ENCODE measurements at regions of chr3 and their contacts with region 1.

Region 1: GRCh38 chr3:133426721-133427120 is 26.9 kb downstream of the BFSP2 start:
- DNase-seq: no peak
- H3K4me3 ChIP-seq: no peak overlapping the region
- H3K4me3 Mint-ChIP-seq: no peak overlapping the region
- H3K27ac Mint-ChIP-seq: no peak overlapping the region
- H3K4me1 ChIP-seq: peaks cover 4% of the 10 kb centered on the region; the same call in 1 of the 2 replicates
- H3K4me1 Mint-ChIP-seq: no peaks in the 10 kb centered on the region
- H3K27me3 ChIP-seq: no peaks in the 10 kb centered on the region
- H3K27me3 Mint-ChIP-seq: no peaks in the 10 kb centered on the region
- CTCF ChIP-seq: no peak

Region 2: DNA sequence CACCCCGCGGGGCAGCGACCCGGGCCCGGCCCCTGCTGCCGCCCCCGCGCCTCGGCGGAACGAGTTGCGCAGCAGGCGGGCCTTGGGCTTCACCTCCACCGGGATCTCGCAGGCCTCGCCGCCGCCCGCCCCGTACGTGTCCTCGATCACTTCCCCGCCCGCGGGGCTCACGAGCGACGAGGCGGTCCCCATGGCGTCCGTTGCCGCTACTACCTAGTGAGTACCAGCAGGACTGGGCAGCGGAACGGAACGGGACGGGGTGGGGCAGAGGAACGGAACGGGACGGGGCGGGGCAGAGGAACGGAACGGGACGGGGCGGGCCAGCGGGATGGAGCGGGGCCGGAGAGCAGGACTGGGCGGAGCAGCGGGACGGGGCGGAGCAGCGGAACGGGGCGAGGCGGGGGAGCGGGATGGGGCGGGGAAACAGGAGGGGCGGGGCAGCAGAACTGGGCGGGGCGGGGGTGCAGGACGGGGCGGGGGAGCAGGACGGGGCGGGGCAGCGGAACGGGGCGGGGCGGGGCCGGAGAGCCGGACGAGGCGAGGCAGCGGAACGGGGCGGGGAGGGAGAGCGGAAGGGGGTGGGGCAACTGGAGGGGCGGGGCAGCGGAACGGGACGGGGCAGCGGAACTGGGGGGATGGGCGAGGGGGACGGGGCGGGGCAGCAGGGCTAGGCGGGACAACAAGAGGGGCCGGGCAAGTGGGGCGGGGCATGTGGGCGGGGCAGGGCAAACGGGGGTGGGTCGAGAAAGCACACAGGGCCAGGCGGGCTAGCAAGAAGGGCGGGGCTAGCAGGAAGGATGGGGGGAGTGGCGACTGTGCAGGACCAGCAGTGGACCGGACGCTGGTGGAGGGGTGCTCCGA is 704.3 kb before region 1 on chr3 and contains the start of gene NPHP3:
- CTCF ChIA-PET with region 1: no interaction called
- POLR2A ChIA-PET with region 1: no interaction called
- intact Hi-C with region 1: loop called (anchors 1 kb)
- DNase-seq: peak; percentile 92 to 98
- H3K4me3 ChIP-seq: peak within 1 kb of the TSS; percentile 97
- H3K4me3 Mint-ChIP-seq: peak within 1 kb of the TSS; percentile 87
- H3K27ac Mint-ChIP-seq: peak within 1 kb of the TSS; percentile 88
- H3K4me1 ChIP-seq: peaks cover 9% of the 10 kb centered on the region
- H3K4me1 Mint-ChIP-seq: peaks cover 16% of the 10 kb centered on the region
- H3K27me3 ChIP-seq: no peaks in the 10 kb centered on the region
- H3K27me3 Mint-ChIP-seq: no peaks in the 10 kb centered on the region
- CTCF ChIP-seq: no peak
- total RNA-seq, gene NPHP3: 16.0 and 16.9 TPM in 2 replicates

Region 3: DNA sequence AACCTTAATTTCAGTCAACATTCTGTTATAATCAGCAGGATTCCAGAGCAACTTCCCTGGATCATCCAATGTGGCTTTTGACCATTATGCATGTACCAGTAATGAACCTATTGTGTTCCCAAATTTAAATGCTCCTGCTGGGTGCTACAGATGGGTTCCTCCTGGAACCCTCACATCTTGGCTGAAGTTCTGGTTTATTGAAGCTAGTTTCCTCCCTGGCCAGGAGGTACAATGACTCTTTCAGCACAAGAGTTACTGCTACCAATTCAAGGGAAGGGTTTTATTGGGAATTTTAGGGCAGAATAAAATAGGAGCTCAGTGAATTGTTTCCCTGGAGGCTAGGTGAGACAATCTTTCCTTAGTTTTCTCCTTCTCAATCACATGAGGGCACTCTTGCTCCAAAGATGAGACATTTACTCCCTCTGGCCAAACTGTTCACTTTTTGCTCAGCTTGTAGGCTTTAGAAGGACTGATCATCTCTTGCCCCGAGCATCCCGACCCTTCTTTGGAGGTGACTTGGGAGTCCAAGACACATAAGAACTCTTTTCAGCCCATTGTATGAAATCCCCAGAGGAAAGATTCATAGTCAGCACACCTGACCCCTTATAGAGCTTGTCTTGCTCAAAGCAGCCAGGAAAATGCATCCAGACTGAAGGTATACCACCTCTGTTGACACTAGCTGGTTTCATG is 695.7 kb before region 1 on chr3:
- CTCF ChIA-PET with region 1: interaction called, 4 read pairs
- POLR2A ChIA-PET with region 1: no interaction called
- intact Hi-C with region 1: loop called (anchors 1 kb)
- DNase-seq: peak in 1 of 2 experiments; percentile 47
- H3K4me3 ChIP-seq: no peak overlapping the region
- H3K4me3 Mint-ChIP-seq: no peak overlapping the region
- H3K27ac Mint-ChIP-seq: no peak overlapping the region
- H3K4me1 ChIP-seq: peaks cover 1% of the 10 kb centered on the region; the same call in 1 of the 2 replicates
- H3K4me1 Mint-ChIP-seq: no peaks in the 10 kb centered on the region
- H3K27me3 ChIP-seq: no peaks in the 10 kb centered on the region
- H3K27me3 Mint-ChIP-seq: peaks cover 8% of the 10 kb centered on the region
- CTCF ChIP-seq: peak in 1 of 2 experiments; percentile 44

Region 4: GRCh38 chr3:133413161-133414020 is 13.3 kb before region 1 on chr3:
- CTCF ChIA-PET with region 1: no interaction called
- POLR2A ChIA-PET with region 1: no interaction called
- intact Hi-C with region 1: no loop called
- DNase-seq: no peak
- H3K4me3 ChIP-seq: no peak overlapping the region
- H3K4me3 Mint-ChIP-seq: peak overlapping the region; percentile 31
- H3K27ac Mint-ChIP-seq: no peak overlapping the region
- H3K4me1 ChIP-seq: no peaks in the 10 kb centered on the region
- H3K4me1 Mint-ChIP-seq: no peaks in the 10 kb centered on the region
- H3K27me3 ChIP-seq: no peaks in the 10 kb centered on the region
- H3K27me3 Mint-ChIP-seq: peaks cover 4% of the 10 kb centered on the region
- CTCF ChIP-seq: no peak

Measured in Caco-2 (cell line).